HAP-1 (cell line): ENCODE measurements at regions of chr3 and their contacts with region 1.

Region 1: GRCh38 chr3:141441381-141442364 is 45.2 kb upstream of the RASA2 start:
- DNase-seq: peak; percentile 64 to 82
- H3K4me3 ChIP-seq: no peak overlapping the region
- H3K4me1 ChIP-seq: peaks cover 7% of the 10 kb centered on the region
- H3K27me3 ChIP-seq: no peaks in the 10 kb centered on the region

Region 2: DNA sequence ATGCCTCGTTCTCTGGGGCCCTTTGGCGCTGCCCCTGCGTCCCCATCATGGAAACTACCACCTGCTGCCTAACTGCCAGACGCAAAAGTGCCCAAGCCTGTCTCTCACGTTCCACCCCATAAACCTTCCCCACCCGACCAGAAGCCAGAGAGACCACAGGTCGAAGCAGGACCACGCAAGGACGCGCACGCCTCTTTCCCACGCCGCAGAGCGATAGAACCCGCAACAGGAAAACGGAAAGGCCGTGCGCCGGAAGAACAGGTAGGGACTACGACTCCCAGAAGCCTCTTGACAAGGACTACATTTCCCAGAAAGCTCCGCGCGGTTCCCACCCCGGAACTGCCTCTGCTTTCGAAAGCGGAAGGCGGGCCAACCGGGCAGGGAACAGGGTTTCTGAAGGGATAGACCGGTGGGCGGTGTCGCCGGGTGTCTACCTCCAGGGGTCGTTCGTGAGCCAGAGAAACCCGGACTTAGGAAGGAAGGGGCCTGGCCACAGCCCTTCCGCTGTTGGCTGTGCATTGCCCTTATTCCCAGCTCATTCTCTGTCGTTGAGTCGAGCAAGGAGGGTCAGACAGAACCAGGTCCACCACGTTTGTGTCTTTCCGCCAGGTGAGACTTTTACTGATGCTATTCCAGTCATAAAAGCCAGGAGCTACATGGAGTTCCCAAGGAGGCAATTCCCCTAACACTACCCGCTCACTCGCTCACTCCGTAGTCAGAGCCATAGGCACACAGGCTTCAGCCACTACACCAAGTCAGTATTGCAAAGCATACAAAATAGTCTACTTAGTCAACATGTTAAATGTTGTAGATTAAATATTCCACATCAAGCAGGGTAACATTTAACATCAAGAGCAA is 129.9 kb before region 1 on chr3:
- in situ Hi-C with region 1: loop called (anchors 5 kb)
- DNase-seq: peak; percentile 97 to 99
- H3K4me3 ChIP-seq: peak overlapping the region; percentile 66
- H3K4me1 ChIP-seq: peaks cover 9% of the 10 kb centered on the region
- H3K27me3 ChIP-seq: no peaks in the 10 kb centered on the region